K562 (cell line): ENCODE measurements at regions of chr16 and their contacts with region 1.

Region 1: DNA sequence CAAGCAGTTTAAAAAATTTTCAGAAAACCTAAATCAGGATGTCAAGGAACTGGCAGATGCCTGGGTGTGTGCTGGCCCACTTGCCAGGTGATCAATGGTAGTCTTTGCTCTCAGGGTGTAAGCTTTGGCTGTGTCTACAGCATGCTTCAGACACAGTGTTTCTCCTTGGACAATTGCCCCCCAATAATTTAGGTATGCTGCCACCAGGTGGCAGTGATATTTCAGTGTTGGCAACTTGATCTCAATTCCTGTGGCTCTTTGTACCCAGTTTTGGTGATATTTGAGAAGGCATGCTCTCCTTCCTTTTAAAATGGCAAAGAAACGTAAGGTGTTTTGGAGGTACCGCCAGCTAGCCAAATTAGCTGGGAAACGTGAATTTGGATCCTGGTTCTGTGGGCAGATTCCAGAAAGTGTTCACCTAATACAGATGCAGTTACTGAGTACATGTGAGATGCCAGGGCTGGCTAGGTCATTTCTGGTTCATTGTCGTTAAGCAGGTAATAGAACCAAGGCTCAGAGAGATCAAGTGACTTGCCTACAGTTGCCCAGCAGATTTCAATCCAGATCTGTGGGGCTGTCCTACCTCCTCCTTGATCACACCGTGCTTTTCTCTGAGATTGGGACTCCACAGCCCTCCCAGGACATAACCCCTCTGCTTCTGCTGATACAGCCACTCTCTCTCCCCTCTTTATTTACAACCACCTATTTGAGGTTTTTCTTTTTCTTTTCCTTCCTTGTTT is 155.6 kb upstream of the PLCG2 start:
- DNase-seq: peak; percentile 51 to 81 (median 61)
- ATAC-seq: peak; percentile 32
- H3K4me3 ChIP-seq: no peak overlapping the region
- H3K27ac ChIP-seq: peak overlapping the region; percentile 3; the same call in 1 of the 3 replicates
- H3K4me1 ChIP-seq: peaks cover 35% of the 10 kb centered on the region in 2 experiments
- H3K27me3 ChIP-seq: no peaks in the 10 kb centered on the region
- CTCF ChIP-seq: peak; percentile 74 to 91 (median 82)
- EP300 ChIP-seq: no peak
- POLR2A ChIP-seq: no peak
- RAD21 ChIP-seq: peak; percentile 92 to 95

Region 2: GRCh38 chr16:81696961-81697615 is 73.6 kb after region 1 on chr16:
- CTCF ChIA-PET with region 1: interaction called, 42 read pairs
- POLR2A ChIA-PET with region 1: interaction called, 6 read pairs
- in situ Hi-C with region 1: loop called (anchors 5 kb)
- intact Hi-C with region 1: loop called (anchors 1 kb)
- DNase-seq: peak; percentile 57 to 83 (median 74)
- ATAC-seq: peak; percentile 93
- H3K4me3 ChIP-seq: no peak overlapping the region
- H3K27ac ChIP-seq: no peak overlapping the region; the same call in 2 of the 3 replicates
- H3K4me1 ChIP-seq: peaks cover 2 to 18% of the 10 kb centered on the region in 2 experiments; a peak in 4 of 5 replicates
- H3K27me3 ChIP-seq: no peaks in the 10 kb centered on the region
- CTCF ChIP-seq: peak; percentile 90 to 96 (median 94)
- EP300 ChIP-seq: no peak; the same call in 1 of the 2 replicates
- POLR2A ChIP-seq: no peak
- RAD21 ChIP-seq: peak; percentile 83 to 92

Region 3: DNA sequence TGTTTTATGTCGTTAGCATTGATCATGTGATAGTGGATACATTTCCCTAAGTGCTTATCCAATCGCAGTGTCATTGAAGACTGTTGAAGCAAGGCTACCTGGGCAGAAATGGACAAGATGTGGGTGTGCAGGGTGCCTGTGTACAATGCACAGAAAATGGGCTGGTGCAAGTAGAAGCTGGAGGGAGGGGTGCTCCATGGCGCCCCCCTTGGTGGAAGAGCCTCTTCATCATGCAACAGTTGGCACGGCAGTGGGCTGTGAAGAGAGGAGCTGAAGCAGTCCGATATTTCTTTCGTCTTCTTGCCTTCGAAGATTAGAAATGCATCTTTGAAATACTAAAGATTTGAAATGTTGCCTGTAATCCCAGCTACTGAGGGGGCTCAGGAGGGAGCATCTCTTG is 256.1 kb after region 1 on chr16:
- CTCF ChIA-PET with region 1: no interaction called
- POLR2A ChIA-PET with region 1: no interaction called
- in situ Hi-C with region 1: no loop called
- intact Hi-C with region 1: no loop called
- DNase-seq: peak in 3 of 4 experiments; percentile 28 to 40 (median 39)
- ATAC-seq: peak; percentile 78
- H3K4me3 ChIP-seq: no peak overlapping the region
- H3K27ac ChIP-seq: no peak overlapping the region
- H3K4me1 ChIP-seq: no peaks in the 10 kb centered on the region
- H3K27me3 ChIP-seq: peaks cover 28 to 68% of the 10 kb centered on the region in 2 experiments
- CTCF ChIP-seq: peak; percentile 45 to 67 (median 54); a peak in 5 of 6 replicates
- EP300 ChIP-seq: no peak
- POLR2A ChIP-seq: no peak
- RAD21 ChIP-seq: no peak